ENCODE measurements at regions of chr13 and their contacts with region 1.

Region 1: GRCh38 chr13:45142440-45143345 is 22.4 kb downstream of the GTF2F2 start:
- DNase-seq: no peak
- ATAC-seq: no peak
- H3K4me3 ChIP-seq: no peak overlapping the region
- H3K4me3 Mint-ChIP-seq: no peak overlapping the region
- H3K27ac ChIP-seq: no peak overlapping the region
- H3K27ac Mint-ChIP-seq: no peak overlapping the region
- H3K4me1 ChIP-seq: peaks cover 0 to 4% of the 10 kb centered on the region in 2 experiments
- H3K4me1 Mint-ChIP-seq: peaks cover 28 to 46% (median 30%) of the 10 kb centered on the region in 3 donors
- H3K27me3 ChIP-seq: no peaks in the 10 kb centered on the region
- H3K27me3 Mint-ChIP-seq: no peaks in the 10 kb centered on the region

Region 2: DNA sequence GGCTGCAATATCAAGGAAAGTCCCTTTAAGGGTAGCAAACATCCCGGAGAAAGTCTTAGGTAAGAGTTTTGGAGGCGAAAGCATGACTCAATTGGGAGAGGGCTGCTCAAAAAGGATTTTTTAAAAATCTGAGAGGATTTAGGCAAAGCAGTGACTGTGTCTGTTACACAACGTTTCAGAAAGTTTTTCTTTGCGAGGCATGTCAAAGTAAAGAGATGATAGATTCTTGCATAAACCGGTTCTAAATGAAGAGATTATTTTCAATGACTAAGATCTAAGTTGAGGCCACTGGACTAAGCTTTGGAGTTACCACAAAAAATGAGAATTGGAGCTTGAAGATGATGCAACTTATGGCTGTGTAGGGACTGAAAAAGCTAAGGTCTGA is 1312.2 kb before region 1 on chr13:
- CTCF ChIA-PET with region 1: no interaction called
- POLR2A ChIA-PET with region 1: interaction called in 1 of 2 experiments, 11 read pairs
- DNase-seq: no peak
- ATAC-seq: no peak
- H3K4me3 ChIP-seq: no peak overlapping the region
- H3K4me3 Mint-ChIP-seq: no peak overlapping the region
- H3K27ac ChIP-seq: no peak overlapping the region
- H3K27ac Mint-ChIP-seq: no peak overlapping the region
- H3K4me1 ChIP-seq: no peaks in the 10 kb centered on the region
- H3K4me1 Mint-ChIP-seq: no peaks in the 10 kb centered on the region
- H3K27me3 ChIP-seq: no peaks in the 10 kb centered on the region
- H3K27me3 Mint-ChIP-seq: peaks cover 6 to 26% of the 10 kb centered on the region in 2 donors

Region 3: GRCh38 chr13:45490068-45490467 is 347.4 kb after region 1 on chr13:
- CTCF ChIA-PET with region 1: no interaction called
- POLR2A ChIA-PET with region 1: interaction called in 1 of 2 experiments, 12 read pairs
- DNase-seq: peak in 11 of 35 experiments; percentile 5 to 51 (median 14)
- ATAC-seq: peak; percentile 48 to 80 (median 73)
- H3K4me3 ChIP-seq: no peak overlapping the region
- H3K4me3 Mint-ChIP-seq: no peak overlapping the region
- H3K27ac ChIP-seq: no peak overlapping the region
- H3K27ac Mint-ChIP-seq: no peak overlapping the region
- H3K4me1 ChIP-seq: no peaks in the 10 kb centered on the region
- H3K4me1 Mint-ChIP-seq: no peaks in the 10 kb centered on the region
- H3K27me3 ChIP-seq: no peaks in the 10 kb centered on the region
- H3K27me3 Mint-ChIP-seq: no peaks in the 10 kb centered on the region

Region 4: DNA sequence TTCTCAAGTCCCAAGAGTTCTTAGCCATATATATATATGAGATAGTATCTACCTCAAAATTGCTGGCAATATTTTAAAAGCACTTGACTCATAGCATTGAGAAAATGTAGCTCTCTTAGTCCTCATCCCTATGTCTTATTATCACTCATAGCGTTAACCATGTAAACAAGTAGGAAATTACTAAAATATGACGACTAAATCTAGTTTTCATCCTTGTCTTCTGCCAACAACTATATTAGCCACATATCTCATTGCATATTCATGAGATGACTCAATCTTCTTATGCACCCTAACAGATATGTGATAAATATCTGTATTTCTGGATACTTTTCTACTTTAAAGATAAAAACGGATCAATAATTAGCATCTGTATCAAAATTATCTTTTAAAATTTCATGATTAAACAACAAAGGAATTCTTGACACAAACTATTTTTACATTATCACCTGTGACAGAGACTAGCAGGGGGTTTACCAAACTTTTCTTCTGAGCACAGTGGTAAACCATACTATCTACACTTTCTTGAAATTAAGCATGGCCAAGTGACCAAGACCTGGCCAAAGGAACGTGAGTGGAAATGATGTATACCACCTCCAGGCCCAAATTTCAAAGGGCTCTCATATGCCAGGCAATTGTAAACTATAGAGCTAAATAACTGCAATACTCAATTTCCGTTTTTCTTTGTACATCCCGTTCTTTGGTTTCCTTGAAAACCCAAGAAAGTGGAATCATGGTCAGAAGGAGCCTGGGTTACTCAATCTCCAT is 864.2 kb after region 1 on chr13:
- CTCF ChIA-PET with region 1: interaction called in 1 of 2 experiments, 11 read pairs
- POLR2A ChIA-PET with region 1: no interaction called
- DNase-seq: no peak
- ATAC-seq: no peak
- H3K4me3 ChIP-seq: no peak overlapping the region
- H3K4me3 Mint-ChIP-seq: no peak overlapping the region
- H3K27ac ChIP-seq: no peak overlapping the region
- H3K27ac Mint-ChIP-seq: no peak overlapping the region
- H3K4me1 ChIP-seq: no peaks in the 10 kb centered on the region
- H3K4me1 Mint-ChIP-seq: peaks cover 0 to 8% (median 8%) of the 10 kb centered on the region in 3 donors
- H3K27me3 ChIP-seq: no peaks in the 10 kb centered on the region
- H3K27me3 Mint-ChIP-seq: no peaks in the 10 kb centered on the region